GM12878 (cell line): ENCODE measurements at regions of chr2 and their contacts with region 1.

Region 1: DNA sequence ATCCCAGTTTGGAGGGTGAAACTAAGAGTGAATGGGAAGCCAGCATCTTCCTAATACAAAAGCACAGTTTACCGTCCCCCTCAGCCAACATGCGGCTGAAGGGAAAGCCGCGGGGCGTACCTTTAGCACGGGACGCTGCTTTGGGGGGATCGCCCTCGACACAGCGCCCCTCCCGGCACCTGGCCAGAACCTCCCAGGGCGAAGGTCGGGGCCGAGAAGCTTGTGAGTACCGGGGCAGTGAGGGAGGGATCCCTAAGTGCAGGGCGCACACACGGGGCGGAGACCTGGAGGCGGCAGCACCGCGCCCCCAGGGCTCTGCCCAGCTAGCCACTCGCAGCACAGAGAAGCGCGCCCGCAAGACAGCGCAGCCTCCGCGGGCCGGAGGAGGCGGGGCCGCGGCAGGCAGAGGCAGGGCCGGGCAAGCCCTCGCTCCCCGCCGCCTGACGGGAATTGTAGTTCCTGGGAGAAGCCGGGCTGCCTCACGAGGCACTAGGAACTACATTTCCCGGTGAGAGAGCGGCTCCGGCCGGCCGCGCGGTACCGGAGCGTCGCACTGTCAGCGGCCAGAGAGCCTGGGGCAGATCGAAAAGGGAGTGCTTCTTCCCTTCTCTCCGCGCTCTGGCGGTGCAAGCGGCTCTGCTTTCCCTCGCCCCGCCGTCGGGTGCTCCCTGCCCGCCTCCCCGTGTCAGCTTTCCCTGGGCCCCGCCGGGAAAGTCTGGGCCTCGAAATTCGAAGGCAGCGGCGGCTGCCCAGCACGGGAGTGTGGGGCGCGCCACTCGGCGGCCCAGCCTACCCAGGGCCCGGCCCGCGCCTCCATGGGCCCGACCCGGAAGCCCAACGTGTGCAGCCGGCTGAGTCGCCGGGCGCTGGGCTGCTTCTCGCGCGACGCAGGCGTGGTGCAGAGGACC is at the starts of genes DCAF17 and METTL8:
- DNase-seq: peak; percentile 94
- ATAC-seq: peak; percentile 94
- H3K4me3 ChIP-seq: peak within 1 kb of the TSS; percentile 81
- H3K27ac ChIP-seq: peak within 1 kb of the TSS; percentile 93
- H3K4me1 ChIP-seq: peaks cover 13% of the 10 kb centered on the region
- H3K27me3 ChIP-seq: no peaks in the 10 kb centered on the region
- CTCF ChIP-seq: peak; percentile 52 to 72 (median 61)
- EP300 ChIP-seq: no peak
- POLR2A ChIP-seq: peak; percentile 92
- RAD21 ChIP-seq: peak; percentile 33
- polyA plus RNA-seq, gene DCAF17: 5.2 to 5.6 TPM
- polyA plus RNA-seq, gene METTL8: 34.9 to 42.5 TPM

Region 2: DNA sequence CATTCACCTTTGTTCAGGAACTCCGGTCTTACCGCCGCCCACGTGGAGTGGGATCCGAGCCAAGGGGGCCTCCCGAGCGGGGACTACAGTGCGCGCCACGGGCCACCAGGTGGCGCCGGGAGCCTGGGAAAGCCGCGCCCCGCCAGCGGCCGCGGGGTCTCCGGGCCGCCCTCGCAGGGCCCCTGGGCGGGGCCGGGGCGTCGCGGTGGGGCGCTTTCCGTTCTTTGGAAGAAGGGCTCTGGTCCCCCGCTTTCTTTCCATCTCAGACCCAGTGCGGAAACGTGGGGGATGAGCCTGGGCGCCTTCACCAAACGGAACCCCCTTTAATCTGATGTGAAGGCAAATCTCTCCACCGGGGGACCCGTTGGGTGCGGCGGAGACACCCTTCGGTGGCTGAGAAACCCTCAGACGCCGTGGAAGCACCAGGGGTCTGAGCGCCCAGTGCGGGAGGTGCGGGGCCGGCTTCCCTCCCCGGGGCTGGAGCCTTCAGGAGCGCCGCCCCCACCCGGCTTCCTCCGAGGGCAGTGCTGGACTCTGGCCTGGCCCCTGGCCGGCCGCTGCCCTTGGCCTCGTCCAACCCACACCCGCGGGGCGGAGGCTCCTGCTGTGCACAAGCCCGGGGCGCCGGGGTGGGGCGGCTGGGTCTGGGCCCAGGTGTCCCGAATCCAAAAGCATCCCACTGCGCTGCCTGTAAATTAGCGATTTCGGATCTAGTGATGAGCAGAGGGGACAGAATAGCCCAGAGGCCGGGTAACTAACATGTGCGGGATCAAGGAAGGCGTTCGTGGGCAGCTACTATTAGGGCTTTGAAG is 460.3 kb before region 1 on chr2:
- CTCF ChIA-PET with region 1: interaction called, 4 read pairs
- POLR2A ChIA-PET with region 1: no interaction called
- RAD21 ChIA-PET with region 1: interaction called, 3 read pairs
- SMC1A ChIA-PET with region 1: interaction called, 4 read pairs
- in situ Hi-C with region 1: loop called (anchors 25 kb)
- intact Hi-C with region 1: loop called (anchors 5 kb)
- DNase-seq: peak; percentile 64
- ATAC-seq: peak; percentile 97
- H3K4me3 ChIP-seq: peak overlapping the region; percentile 78
- H3K27ac ChIP-seq: peak overlapping the region; percentile 72
- H3K4me1 ChIP-seq: peaks cover 10% of the 10 kb centered on the region
- H3K27me3 ChIP-seq: no peaks in the 10 kb centered on the region
- CTCF ChIP-seq: peak; percentile 88 to 96 (median 89)
- EP300 ChIP-seq: peak in 1 of 2 experiments; percentile 40; a peak in 1 of 4 replicates
- POLR2A ChIP-seq: peak; percentile 74
- RAD21 ChIP-seq: peak; percentile 90

Region 3: GRCh38 chr2:171191021-171191420 is 243.0 kb before region 1 on chr2:
- CTCF ChIA-PET with region 1: no interaction called
- POLR2A ChIA-PET with region 1: interaction called, 10 read pairs
- RAD21 ChIA-PET with region 1: no interaction called
- SMC1A ChIA-PET with region 1: no interaction called
- in situ Hi-C with region 1: no loop called
- intact Hi-C with region 1: no loop called
- DNase-seq: no peak
- ATAC-seq: no peak
- H3K4me3 ChIP-seq: no peak overlapping the region
- H3K27ac ChIP-seq: no peak overlapping the region
- H3K4me1 ChIP-seq: no peaks in the 10 kb centered on the region
- H3K27me3 ChIP-seq: no peaks in the 10 kb centered on the region
- CTCF ChIP-seq: no peak
- EP300 ChIP-seq: no peak
- POLR2A ChIP-seq: no peak
- RAD21 ChIP-seq: no peak

Region 4: DNA sequence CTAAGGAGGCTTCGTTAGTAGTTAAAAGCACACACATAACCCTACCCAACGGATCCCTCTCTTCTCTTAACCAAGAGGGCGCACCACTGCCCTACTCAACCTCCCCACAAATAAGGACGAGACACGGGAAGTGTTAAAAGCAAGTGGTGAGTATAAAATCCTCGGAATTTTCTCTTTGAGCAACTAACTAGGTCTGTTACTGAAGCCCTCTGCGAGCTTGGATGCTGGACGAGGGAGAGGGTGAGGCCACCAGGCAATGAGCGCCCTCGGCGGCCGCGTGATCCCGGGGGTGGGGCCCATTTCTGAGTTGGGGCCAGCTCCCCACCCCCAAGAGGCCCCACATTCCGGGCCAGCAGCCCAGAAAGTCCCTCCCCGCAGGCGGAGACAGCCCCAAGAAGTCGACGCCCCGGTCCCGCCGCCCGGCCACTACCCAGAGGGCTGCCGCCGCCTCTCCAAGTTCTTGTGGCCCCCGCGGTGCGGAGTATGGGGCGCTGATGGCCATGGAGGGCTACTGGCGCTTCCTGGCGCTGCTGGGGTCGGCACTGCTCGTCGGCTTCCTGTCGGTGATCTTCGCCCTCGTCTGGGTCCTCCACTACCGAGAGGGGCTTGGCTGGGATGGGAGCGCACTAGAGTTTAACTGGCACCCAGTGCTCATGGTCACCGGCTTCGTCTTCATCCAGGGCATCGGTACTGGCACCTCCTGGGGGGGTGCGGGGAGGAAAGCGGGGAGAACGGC is 88.2 kb after region 1 on chr2 and contains the start of gene CYBRD1:
- CTCF ChIA-PET with region 1: interaction called, 3 read pairs
- POLR2A ChIA-PET with region 1: interaction called, 3 read pairs
- RAD21 ChIA-PET with region 1: no interaction called
- SMC1A ChIA-PET with region 1: interaction called, 4 read pairs
- in situ Hi-C with region 1: no loop called
- intact Hi-C with region 1: loop called (anchors 5 kb)
- DNase-seq: no peak
- ATAC-seq: peak; percentile 79
- H3K4me3 ChIP-seq: peak within 1 kb of the TSS; percentile 95
- H3K27ac ChIP-seq: peak within 1 kb of the TSS; percentile 81
- H3K4me1 ChIP-seq: peaks cover 6% of the 10 kb centered on the region; the same call in 1 of the 2 replicates
- H3K27me3 ChIP-seq: no peaks in the 10 kb centered on the region
- CTCF ChIP-seq: 0 out of 6 replicates have a peak, but pooled peaks of 1 of the 3 experiments have one; percentile 4
- EP300 ChIP-seq: no peak
- POLR2A ChIP-seq: peak; percentile 90
- RAD21 ChIP-seq: no peak
- polyA plus RNA-seq, gene CYBRD1: 10.8 to 13.2 TPM